ENCODE measurements at regions of chr18 and their contacts with region 1.

Region 1: GRCh38 chr18:63422087-63422809 is at the start of gene VPS4B:
- DNase-seq: peak; percentile 98 to 99
- H3K4me3 ChIP-seq: peak within 1 kb of the TSS; percentile 83 to 98 (median 91)
- H3K27ac ChIP-seq: peak within 1 kb of the TSS; percentile 92
- H3K4me1 ChIP-seq: peaks cover 0 to 3% (median 0%) of the 10 kb centered on the region in 4 experiments; a peak in 1 of 7 replicates
- H3K27me3 ChIP-seq: no peaks in the 10 kb centered on the region
- CTCF ChIP-seq: no peak
- EP300 ChIP-seq: no peak
- POLR2A ChIP-seq: peak; percentile 90 to 98
- RAD21 ChIP-seq: no peak
- total RNA-seq, gene VPS4B: 42.7 and 45.3 TPM in 2 replicates

Region 2: DNA sequence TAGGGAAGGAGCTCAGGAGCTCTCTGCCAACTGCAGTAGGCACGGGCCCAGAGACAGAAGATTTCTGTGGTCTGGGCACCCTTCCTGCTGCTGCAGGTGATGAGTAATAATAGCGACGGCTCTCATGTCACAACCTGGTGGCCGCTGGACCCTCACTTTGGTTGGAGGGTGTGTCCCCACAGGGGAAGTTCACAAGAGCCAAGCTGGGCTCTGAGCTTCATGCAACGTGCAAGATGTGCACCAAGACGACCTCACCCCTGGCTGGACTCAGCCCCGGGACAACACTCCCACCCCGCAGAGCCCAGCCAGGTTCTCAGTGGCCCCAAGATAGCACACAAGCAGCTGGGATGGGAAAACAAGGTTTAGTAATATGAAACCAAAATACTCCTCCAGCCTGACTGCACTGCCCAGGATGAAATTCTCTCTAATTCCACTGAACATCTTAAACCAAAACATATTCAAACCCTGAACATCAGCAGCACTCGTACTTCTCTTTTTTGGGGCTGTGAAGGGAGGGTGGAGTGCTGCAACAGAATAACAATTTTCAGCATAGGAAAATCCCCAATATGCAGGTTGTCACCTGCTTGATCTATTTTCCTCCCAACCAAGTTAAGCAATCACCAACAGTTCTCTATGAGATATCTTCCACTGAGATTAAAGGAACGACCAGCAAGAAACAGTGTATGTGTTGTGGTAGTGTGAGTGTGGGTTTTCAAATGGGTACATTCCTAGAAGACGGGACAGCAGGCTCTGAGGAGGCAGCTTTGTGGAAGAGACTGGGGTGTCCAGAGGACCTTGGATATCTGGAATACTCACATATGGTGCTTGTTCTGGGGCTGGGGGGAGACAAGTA is 129.2 kb before region 1 on chr18:
- CTCF ChIA-PET with region 1: no interaction called
- POLR2A ChIA-PET with region 1: no interaction called
- DNase-seq: no peak
- H3K4me3 ChIP-seq: no peak overlapping the region
- H3K27ac ChIP-seq: no peak overlapping the region
- H3K4me1 ChIP-seq: peaks cover 2 to 7% (median 4%) of the 10 kb centered on the region in 4 experiments; a peak in 4 of 7 replicates
- H3K27me3 ChIP-seq: no peaks in the 10 kb centered on the region
- CTCF ChIP-seq: no peak
- EP300 ChIP-seq: no peak
- POLR2A ChIP-seq: no peak
- RAD21 ChIP-seq: no peak

Region 3: DNA sequence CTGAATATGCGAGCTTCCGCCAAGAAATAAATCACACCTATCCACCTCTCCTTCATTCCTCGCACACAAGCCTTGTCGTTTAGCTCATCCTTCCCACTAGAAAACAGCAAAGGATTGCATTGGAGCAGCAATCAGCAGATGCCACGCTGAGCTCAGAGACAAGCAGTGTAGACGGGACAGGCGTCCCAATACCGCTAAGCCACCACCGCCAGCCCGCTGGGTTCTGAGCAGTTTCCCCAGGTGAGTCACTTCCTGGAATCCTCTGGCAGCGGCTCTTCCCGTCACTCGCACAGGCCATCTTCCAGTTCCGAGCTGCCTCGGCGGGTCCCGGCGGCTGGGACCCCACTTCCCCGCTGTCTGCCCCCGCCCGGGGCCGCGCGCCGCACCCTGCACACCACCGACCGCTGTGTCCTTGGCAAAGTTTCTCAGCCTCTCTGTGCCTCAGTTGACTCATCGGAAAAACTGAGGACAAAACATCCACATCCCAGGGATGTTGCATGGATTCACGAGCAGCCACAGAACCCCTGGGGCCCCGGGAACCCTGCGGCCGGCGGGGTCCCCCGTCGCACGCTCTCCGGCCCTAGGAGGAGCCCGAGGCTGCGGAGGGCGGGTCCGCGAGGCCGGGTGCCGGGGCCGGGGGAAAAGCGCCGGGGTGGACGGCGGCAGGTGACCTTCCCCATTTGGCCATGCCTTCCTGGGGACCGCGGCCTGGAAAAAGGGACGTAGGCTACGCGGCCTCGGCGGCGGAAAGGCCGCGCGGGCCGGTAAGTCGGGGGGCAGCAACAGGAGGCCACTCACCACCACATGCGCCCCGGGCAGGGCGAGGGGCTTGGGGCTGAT is 55.8 kb before region 1 on chr18:
- CTCF ChIA-PET with region 1: no interaction called
- POLR2A ChIA-PET with region 1: interaction called, 21 read pairs
- DNase-seq: peak; percentile 34 to 58
- H3K4me3 ChIP-seq: peak overlapping the region; percentile 83 to 93 (median 86)
- H3K27ac ChIP-seq: peak overlapping the region; percentile 57; the same call in 1 of the 2 replicates
- H3K4me1 ChIP-seq: peaks cover 0 to 2% (median 0%) of the 10 kb centered on the region in 4 experiments; a peak in 2 of 7 replicates
- H3K27me3 ChIP-seq: no peaks in the 10 kb centered on the region
- CTCF ChIP-seq: no peak
- EP300 ChIP-seq: no peak
- POLR2A ChIP-seq: peak in 1 of 2 experiments; percentile 47; a peak in 1 of 3 replicates
- RAD21 ChIP-seq: no peak

Region 4: GRCh38 chr18:63395503-63395902 is 26.7 kb before region 1 on chr18:
- CTCF ChIA-PET with region 1: no interaction called
- POLR2A ChIA-PET with region 1: no interaction called
- DNase-seq: no peak
- H3K4me3 ChIP-seq: no peak overlapping the region
- H3K27ac ChIP-seq: no peak overlapping the region
- H3K4me1 ChIP-seq: no peaks in the 10 kb centered on the region
- H3K27me3 ChIP-seq: peaks cover 0 to 1% (median 0%) of the 10 kb centered on the region in 4 experiments; a peak in 1 of 7 replicates
- CTCF ChIP-seq: no peak
- EP300 ChIP-seq: no peak
- POLR2A ChIP-seq: no peak
- RAD21 ChIP-seq: no peak